GM12878 (cell line): ENCODE measurements at regions of chr1 and their contacts with region 1.

Region 1: DNA sequence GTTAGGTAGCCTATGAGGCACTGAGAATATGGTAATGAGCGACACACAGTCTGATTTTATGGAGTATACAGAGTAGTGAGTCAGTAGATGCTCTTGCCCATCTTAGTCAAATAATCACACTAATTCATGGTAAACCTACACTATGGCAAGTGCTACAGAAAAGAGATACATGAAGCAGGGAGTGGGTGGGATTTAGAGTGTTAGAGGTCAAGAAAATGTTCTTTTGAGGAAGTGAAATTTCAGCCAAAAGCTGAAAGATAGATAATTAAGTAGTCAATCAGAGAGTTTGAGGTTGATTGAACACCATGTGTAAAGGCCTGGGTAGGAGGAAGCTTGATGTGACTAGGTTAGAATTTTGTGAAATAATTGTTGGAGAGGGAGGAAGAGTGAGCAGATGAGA is 14.7 kb downstream of the MDM4 start:
- DNase-seq: peak; percentile 87
- ATAC-seq: peak; percentile 96
- H3K4me3 ChIP-seq: no peak overlapping the region
- H3K27ac ChIP-seq: peak overlapping the region; percentile 59
- H3K4me1 ChIP-seq: peaks cover 23% of the 10 kb centered on the region
- H3K27me3 ChIP-seq: no peaks in the 10 kb centered on the region
- CTCF ChIP-seq: no peak
- EP300 ChIP-seq: peak in 1 of 2 experiments; percentile 94; a peak in 2 of 4 replicates
- POLR2A ChIP-seq: no peak
- RAD21 ChIP-seq: no peak

Region 2: DNA sequence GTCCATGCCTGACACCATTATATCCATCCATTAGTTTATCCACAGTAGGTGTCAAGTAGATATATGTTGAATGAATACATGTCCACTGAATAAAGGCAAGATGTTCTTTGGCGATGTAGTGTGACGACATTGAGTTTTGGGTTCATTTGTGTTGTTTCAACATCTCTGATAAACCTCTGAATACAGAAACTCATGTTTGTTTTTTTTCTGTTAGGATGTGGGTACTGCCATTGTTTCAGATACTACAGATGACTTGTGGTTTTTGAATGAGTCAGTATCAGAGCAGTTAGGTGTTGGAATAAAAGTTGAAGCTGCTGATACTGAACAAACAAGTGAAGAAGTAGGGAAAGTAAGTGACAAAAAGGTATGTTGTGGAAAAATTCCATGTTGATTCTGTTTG is 13.4 kb after region 1 on chr1:
- CTCF ChIA-PET with region 1: interaction called, 3 read pairs
- POLR2A ChIA-PET with region 1: interaction called, 6 read pairs
- RAD21 ChIA-PET with region 1: no interaction called
- SMC1A ChIA-PET with region 1: interaction called, 15 read pairs
- in situ Hi-C with region 1: no loop called
- intact Hi-C with region 1: loop called (anchors 2 kb)
- DNase-seq: no peak
- ATAC-seq: peak; percentile 90
- H3K4me3 ChIP-seq: no peak overlapping the region
- H3K27ac ChIP-seq: peak overlapping the region; percentile 20; the same call in 1 of the 2 replicates
- H3K4me1 ChIP-seq: peaks cover 16% of the 10 kb centered on the region; the same call in 1 of the 2 replicates
- H3K27me3 ChIP-seq: no peaks in the 10 kb centered on the region
- CTCF ChIP-seq: no peak
- EP300 ChIP-seq: no peak
- POLR2A ChIP-seq: no peak
- RAD21 ChIP-seq: no peak

Region 3: DNA sequence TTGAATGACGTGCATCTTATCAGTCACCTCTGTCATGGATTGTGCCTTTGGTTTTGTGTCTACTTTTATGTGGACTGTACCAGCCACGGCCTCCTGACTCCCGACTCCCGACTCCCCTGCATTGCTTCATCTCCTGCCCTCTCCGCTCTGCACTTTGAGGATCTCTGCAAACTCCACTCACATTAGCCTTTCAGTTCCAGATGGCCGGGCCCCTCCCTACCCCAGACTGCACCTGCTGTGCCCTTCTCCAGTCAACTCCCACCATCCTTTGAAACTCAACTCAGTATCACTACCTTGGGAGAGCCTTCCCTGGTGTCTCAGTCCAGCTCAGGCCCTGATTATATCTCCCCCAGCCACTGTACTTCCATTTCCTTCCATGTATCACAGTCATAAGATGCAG is 56.7 kb after region 1 on chr1:
- CTCF ChIA-PET with region 1: no interaction called
- POLR2A ChIA-PET with region 1: no interaction called
- RAD21 ChIA-PET with region 1: no interaction called
- SMC1A ChIA-PET with region 1: no interaction called
- in situ Hi-C with region 1: no loop called
- intact Hi-C with region 1: no loop called
- DNase-seq: no peak
- ATAC-seq: no peak
- H3K4me3 ChIP-seq: no peak overlapping the region
- H3K27ac ChIP-seq: no peak overlapping the region
- H3K4me1 ChIP-seq: no peaks in the 10 kb centered on the region
- H3K27me3 ChIP-seq: no peaks in the 10 kb centered on the region
- CTCF ChIP-seq: no peak
- EP300 ChIP-seq: no peak
- POLR2A ChIP-seq: no peak
- RAD21 ChIP-seq: no peak